Ovary (tissue), 10 donors: ENCODE measurements at regions of chr10 and their contacts with region 1.

Region 1: GRCh38 chr10:15725603-15726002 is 5.9 kb upstream of the ITGA8 start:
- DNase-seq: peak in 1 of 5 donors; percentile 45
- H3K4me3 ChIP-seq: no peak overlapping the region
- H3K27ac ChIP-seq: no peak overlapping the region
- H3K4me1 ChIP-seq: peaks cover 6% of the 10 kb centered on the region
- H3K27me3 ChIP-seq: no peaks in the 10 kb centered on the region
- CTCF ChIP-seq: peak in 2 of 3 donors; percentile 41 to 51
- EP300 ChIP-seq: no peak
- POLR2A ChIP-seq: no peak

Region 2: DNA sequence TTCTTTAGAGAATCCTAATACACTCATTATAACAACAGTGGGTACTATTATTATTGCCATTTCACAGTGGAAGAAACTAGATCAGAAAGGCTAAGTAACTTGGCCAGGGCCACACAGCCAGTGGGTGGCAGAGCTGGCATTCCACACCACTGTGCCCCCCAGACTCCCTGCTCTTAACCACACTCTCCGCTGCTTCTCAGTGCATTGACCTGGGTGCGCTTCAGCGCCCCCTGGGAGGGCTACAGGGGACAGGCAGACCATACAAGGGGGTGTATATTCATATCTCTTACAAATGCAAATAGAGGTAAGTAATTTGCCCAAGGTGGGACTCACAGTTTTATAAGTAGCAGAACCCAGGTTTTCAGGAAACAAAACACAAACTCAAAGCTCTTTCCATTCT is 480.1 kb before region 1 on chr10:
- intact Hi-C with region 1: loop called in 1 of 4 experiments (anchors 10 kb)
- DNase-seq: no peak
- H3K4me3 ChIP-seq: no peak overlapping the region
- H3K27ac ChIP-seq: no peak overlapping the region
- H3K4me1 ChIP-seq: no peaks in the 10 kb centered on the region
- H3K27me3 ChIP-seq: no peaks in the 10 kb centered on the region
- CTCF ChIP-seq: no peak
- EP300 ChIP-seq: no peak
- POLR2A ChIP-seq: no peak

Region 3: DNA sequence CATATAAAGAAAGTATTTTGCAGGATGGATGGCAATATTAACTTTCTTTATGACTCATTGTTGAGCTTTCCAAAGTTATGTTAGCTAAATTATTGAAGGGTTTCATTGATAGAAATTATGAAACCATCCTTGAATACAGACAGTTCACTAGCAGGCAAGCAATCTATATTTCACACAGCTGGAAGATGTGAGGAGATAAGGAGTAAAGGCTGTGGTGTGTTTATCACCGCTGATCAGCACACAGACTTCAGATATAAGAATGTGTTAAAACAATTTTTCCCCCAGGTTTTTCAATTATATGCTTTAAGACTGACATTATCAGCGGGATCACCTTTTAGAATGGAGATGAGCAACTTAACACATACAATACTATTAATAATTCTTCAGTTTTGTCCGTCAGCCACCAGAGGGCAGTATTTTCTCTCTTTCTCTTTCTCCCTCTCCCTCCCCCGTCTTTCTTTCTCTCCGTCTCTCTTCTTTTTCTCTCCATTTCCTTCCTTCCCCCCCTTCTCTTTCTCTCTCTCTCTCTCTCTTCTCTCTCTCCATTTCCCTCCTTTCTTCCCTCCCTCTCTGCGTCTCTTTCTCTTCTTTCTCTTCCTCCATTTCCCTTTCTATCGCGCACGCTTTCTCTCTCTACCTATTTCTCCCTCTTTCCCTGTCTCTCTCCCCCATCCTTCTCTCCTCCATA is 291.6 kb before region 1 on chr10:
- intact Hi-C with region 1: loop called in 3 of 4 experiments (anchors 5 to 10 kb)
- DNase-seq: peak in 1 of 5 donors; percentile 53
- H3K4me3 ChIP-seq: peak overlapping the region; percentile 24
- H3K27ac ChIP-seq: no peak overlapping the region
- H3K4me1 ChIP-seq: peaks cover 3% of the 10 kb centered on the region
- H3K27me3 ChIP-seq: no peaks in the 10 kb centered on the region
- CTCF ChIP-seq: peak; percentile 67 to 75 (median 74)
- EP300 ChIP-seq: no peak
- POLR2A ChIP-seq: no peak

Region 4: DNA sequence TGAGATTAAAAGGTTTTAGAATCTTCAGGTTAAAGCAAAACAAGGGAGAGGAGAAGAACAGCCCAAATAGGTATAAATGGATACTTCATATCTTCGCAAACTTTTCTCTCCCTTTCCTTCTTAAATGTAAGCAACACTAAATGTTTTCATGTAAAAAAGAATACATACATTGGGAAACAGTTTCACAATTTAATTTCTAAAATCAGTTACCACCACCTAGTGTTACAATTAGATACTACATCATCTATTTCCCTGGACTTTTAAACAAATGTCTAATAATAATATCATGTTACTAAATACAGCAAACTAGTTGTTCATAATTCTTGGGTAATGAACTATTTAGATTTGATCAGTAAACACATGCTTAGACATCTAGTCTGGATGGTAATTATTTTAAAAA is 98.9 kb after region 1 on chr10:
- intact Hi-C with region 1: loop called in 1 of 4 experiments (anchors 10 kb)
- DNase-seq: no peak
- H3K4me3 ChIP-seq: no peak overlapping the region
- H3K27ac ChIP-seq: no peak overlapping the region
- H3K4me1 ChIP-seq: no peaks in the 10 kb centered on the region
- H3K27me3 ChIP-seq: no peaks in the 10 kb centered on the region
- CTCF ChIP-seq: peak; percentile 33 to 51 (median 39)
- EP300 ChIP-seq: no peak
- POLR2A ChIP-seq: no peak